ENCODE measurements at regions of chr17 and their contacts with region 1.

Region 1: GRCh38 chr17:143782-144281 is 6.5 kb downstream of the SCGB1C2 start:
- DNase-seq: peak; percentile 69 to 92 (median 84)
- ATAC-seq: peak; percentile 97
- H3K4me3 ChIP-seq: no peak overlapping the region
- H3K4me3 Mint-ChIP-seq: no peak overlapping the region
- H3K27ac ChIP-seq: no peak overlapping the region
- H3K27ac Mint-ChIP-seq: no peak overlapping the region
- H3K4me1 ChIP-seq: peaks cover 5% of the 10 kb centered on the region
- H3K4me1 Mint-ChIP-seq: no peaks in the 10 kb centered on the region
- H3K27me3 ChIP-seq: no peaks in the 10 kb centered on the region
- H3K27me3 Mint-ChIP-seq: no peaks in the 10 kb centered on the region
- CTCF ChIP-seq: peak; percentile 86

Region 2: GRCh38 chr17:700504-701094 is 556.8 kb after region 1 on chr17:
- CTCF ChIA-PET with region 1: no interaction called
- POLR2A ChIA-PET with region 1: no interaction called
- intact Hi-C with region 1: loop called (anchors 2 kb)
- DNase-seq: peak in 3 of 14 experiments; percentile 65 to 76 (median 67)
- ATAC-seq: peak; percentile 68
- H3K4me3 ChIP-seq: no peak overlapping the region
- H3K4me3 Mint-ChIP-seq: no peak overlapping the region
- H3K27ac ChIP-seq: no peak overlapping the region
- H3K27ac Mint-ChIP-seq: no peak overlapping the region
- H3K4me1 ChIP-seq: no peaks in the 10 kb centered on the region
- H3K4me1 Mint-ChIP-seq: no peaks in the 10 kb centered on the region
- H3K27me3 ChIP-seq: no peaks in the 10 kb centered on the region
- H3K27me3 Mint-ChIP-seq: no peaks in the 10 kb centered on the region
- CTCF ChIP-seq: peak; percentile 78